ENCODE measurements at regions of chr1 and their contacts with region 1.

Region 1: GRCh38 chr1:78145105-78145580 is 99.4 kb downstream of the GIPC2 start:
- DNase-seq: peak; percentile 45 to 48
- H3K4me3 ChIP-seq: no peak overlapping the region
- H3K27ac ChIP-seq: no peak overlapping the region
- H3K4me1 ChIP-seq: no peaks in the 10 kb centered on the region
- H3K27me3 ChIP-seq: no peaks in the 10 kb centered on the region
- CTCF ChIP-seq: peak; percentile 72 to 92 (median 82)
- POLR2A ChIP-seq: no peak

Region 2: GRCh38 chr1:78095593-78095992 is 49.5 kb before region 1 on chr1:
- intact Hi-C with region 1: no loop called
- DNase-seq: no peak
- H3K4me3 ChIP-seq: no peak overlapping the region
- H3K27ac ChIP-seq: no peak overlapping the region
- H3K4me1 ChIP-seq: no peaks in the 10 kb centered on the region
- H3K27me3 ChIP-seq: no peaks in the 10 kb centered on the region
- CTCF ChIP-seq: no peak
- POLR2A ChIP-seq: no peak

Region 3: GRCh38 chr1:78607334-78607927 is 462.3 kb after region 1 on chr1:
- intact Hi-C with region 1: loop called (anchors 5 kb)
- DNase-seq: no peak
- H3K4me3 ChIP-seq: no peak overlapping the region
- H3K27ac ChIP-seq: no peak overlapping the region
- H3K4me1 ChIP-seq: peaks cover 0 to 6% of the 10 kb centered on the region in 2 donors
- H3K27me3 ChIP-seq: no peaks in the 10 kb centered on the region
- CTCF ChIP-seq: peak; percentile 52 to 74 (median 69)
- POLR2A ChIP-seq: no peak

Measured in uterus (tissue), 4 donors.